Activated CD4-positive, alpha-beta memory T cell treated with anti-CD3 and anti-CD28 coated beads for 36 hours (primary cell): ENCODE measurements at regions of chr2 and their contacts with region 1.

Region 1: DNA sequence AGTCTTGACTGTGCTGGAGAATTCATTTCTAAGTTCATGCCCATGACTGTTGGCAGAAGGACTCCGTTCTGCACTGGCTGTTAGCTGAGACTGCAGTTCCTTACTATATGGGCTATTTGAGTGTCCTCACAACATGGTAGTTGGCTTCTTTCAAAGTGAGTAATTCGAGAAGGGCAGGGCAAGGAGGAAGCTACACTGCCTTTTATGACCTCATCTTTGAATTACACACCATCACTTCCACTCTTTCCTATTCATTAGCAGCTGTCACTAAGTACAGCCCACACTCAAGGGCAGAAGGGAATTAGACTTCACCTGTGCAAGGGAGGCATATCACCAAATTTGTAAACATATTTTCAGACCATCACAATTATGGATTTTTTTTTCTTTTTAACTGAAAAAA is 55.9 kb upstream of the EPAS1 start:
- DNase-seq: no peak
- H3K4me3 Mint-ChIP-seq: no peak overlapping the region
- H3K27ac Mint-ChIP-seq: no peak overlapping the region
- H3K4me1 Mint-ChIP-seq: peaks cover 40% of the 10 kb centered on the region
- H3K27me3 Mint-ChIP-seq: no peaks in the 10 kb centered on the region

Region 2: GRCh38 chr2:46032996-46033395 is 208.3 kb before region 1 on chr2:
- CTCF ChIA-PET with region 1: no interaction called
- POLR2A ChIA-PET with region 1: no interaction called
- intact Hi-C with region 1: loop called (anchors 1 kb)
- DNase-seq: peak; percentile 88
- H3K4me3 Mint-ChIP-seq: no peak overlapping the region
- H3K27ac Mint-ChIP-seq: peak overlapping the region; percentile 76
- H3K4me1 Mint-ChIP-seq: peaks cover 28% of the 10 kb centered on the region
- H3K27me3 Mint-ChIP-seq: no peaks in the 10 kb centered on the region

Region 3: GRCh38 chr2:46187112-46187618 is 54.2 kb before region 1 on chr2:
- CTCF ChIA-PET with region 1: no interaction called
- POLR2A ChIA-PET with region 1: no interaction called
- intact Hi-C with region 1: loop called (anchors 1 kb)
- DNase-seq: peak; percentile 67
- H3K4me3 Mint-ChIP-seq: no peak overlapping the region
- H3K27ac Mint-ChIP-seq: peak overlapping the region; percentile 84
- H3K4me1 Mint-ChIP-seq: peaks cover 13% of the 10 kb centered on the region
- H3K27me3 Mint-ChIP-seq: no peaks in the 10 kb centered on the region

Region 4: DNA sequence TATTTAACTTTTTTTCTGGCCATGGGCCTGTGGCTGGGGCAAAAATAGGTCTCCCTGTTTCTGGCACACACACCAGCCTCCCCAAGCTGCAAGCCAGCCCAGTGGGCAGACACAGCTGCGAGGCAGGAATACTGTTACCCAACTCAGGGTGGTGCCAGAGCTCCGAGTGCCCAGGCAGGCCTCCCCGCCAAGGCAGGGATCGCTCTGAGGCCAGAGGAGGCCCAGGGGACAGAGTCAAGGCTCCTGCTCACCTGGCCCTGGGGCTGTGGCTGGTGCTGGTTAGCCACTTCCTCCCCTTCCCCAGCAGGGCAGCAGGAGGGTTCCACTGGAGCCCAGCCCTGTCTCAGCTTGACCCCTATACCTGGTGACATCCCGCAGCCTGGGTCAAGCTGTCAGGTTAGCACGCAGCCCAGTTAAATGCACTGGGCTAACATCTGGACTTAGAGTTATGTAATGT is 11.2 kb before region 1 on chr2:
- CTCF ChIA-PET with region 1: interaction called, 31 read pairs
- POLR2A ChIA-PET with region 1: interaction called, 16 read pairs
- intact Hi-C with region 1: loop called (anchors 1 kb)
- DNase-seq: peak; percentile 50
- H3K4me3 Mint-ChIP-seq: peak overlapping the region; percentile 16
- H3K27ac Mint-ChIP-seq: peak overlapping the region; percentile 92
- H3K4me1 Mint-ChIP-seq: peaks cover 51% of the 10 kb centered on the region
- H3K27me3 Mint-ChIP-seq: no peaks in the 10 kb centered on the region

Region 5: DNA sequence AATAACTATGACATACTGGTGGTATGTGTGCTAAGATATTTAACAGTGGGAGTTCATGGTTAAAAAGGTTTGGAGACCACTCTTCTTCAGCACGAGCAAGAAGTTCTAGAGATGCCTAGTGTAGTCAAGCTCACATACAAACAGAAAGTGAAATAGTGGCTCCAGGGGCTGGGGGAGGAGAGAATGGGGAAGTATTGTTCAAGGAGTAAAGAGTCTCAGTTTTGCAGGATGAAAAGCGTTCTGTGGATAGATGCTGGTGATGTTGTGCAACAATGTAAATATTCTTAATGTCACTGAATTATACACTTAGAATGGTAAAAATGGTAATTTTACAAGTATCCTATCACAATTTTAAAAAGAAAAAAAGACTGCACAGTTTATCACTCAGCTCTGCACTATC is 26.9 kb after region 1 on chr2:
- CTCF ChIA-PET with region 1: no interaction called
- POLR2A ChIA-PET with region 1: no interaction called
- intact Hi-C with region 1: loop called (anchors 1 kb)
- DNase-seq: no peak
- H3K4me3 Mint-ChIP-seq: no peak overlapping the region
- H3K27ac Mint-ChIP-seq: no peak overlapping the region
- H3K4me1 Mint-ChIP-seq: peaks cover 15% of the 10 kb centered on the region
- H3K27me3 Mint-ChIP-seq: peaks cover 2% of the 10 kb centered on the region

Region 6: DNA sequence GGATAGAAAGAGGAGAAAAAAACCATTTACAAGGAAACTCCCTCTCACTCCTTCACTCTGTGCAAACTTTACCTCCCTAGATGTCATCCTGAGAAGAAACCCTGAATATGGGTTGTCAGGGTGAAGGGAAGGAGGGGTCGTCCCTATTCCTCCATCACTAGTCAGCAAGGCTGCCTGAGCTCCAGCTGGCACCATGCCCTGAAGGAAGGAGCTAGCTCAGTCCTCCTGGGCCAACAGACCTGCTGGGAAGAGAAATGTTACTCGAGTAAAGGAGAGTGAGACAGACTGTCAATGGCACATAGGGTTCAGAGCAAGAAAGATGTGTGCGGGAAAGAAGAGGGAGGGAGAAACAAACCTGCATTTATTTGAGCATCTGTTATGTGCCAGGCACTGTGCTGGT is 37.6 kb after region 1 on chr2:
- CTCF ChIA-PET with region 1: no interaction called
- POLR2A ChIA-PET with region 1: no interaction called
- intact Hi-C with region 1: no loop called
- DNase-seq: no peak
- H3K4me3 Mint-ChIP-seq: no peak overlapping the region
- H3K27ac Mint-ChIP-seq: no peak overlapping the region
- H3K4me1 Mint-ChIP-seq: no peaks in the 10 kb centered on the region
- H3K27me3 Mint-ChIP-seq: peaks cover 24% of the 10 kb centered on the region